ENCODE measurements at regions of chr1 and their contacts with region 1.

Region 1: DNA sequence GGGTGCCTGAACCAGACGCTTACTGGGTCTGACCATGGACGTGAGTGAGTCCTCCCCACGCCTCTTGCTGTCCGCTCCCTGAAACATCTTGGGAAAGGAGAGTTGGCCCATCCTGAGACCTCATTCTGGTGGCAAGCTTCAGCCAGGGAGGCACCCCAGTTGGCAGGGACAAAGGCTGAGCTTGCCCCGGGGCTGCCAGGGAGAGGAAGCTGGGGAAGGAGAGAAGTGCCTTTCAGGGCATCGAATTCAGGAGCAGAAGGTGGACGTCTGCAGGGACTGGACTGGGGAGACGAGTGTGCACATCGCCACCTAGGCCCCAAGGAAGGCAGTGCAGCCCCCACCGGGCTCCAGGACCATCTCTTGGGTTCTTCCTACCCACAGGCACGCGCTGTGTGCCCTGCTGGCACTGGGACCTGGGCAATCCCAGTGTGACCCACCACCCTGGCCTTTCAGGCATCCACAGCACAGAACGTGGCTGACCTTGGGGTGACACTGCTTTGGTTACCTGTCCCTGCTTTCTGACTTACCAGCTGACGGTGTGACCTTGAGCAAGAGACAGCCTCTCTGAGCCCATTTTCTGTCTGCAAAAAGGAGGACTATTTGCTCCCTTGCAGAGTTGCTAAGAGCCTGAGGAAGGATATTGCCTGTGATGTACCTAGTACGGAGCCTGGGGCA is 133.0 kb upstream of the WNT4 start:
- DNase-seq: peak; percentile 83
- H3K4me3 ChIP-seq: no peak overlapping the region; a peak in 1 of 4 replicates
- H3K27ac ChIP-seq: no peak overlapping the region
- H3K4me1 ChIP-seq: peaks cover 0 to 2% of the 10 kb centered on the region in 2 experiments; a peak in 1 of 4 replicates
- H3K27me3 ChIP-seq: peaks cover 11% of the 10 kb centered on the region; the same call in 1 of the 2 replicates
- CTCF ChIP-seq: peak; percentile 71
- EP300 ChIP-seq: no peak
- RAD21 ChIP-seq: peak; percentile 79

Region 2: GRCh38 chr1:22143065-22144036 is 132.5 kb before region 1 on chr1 and contains the start of gene WNT4:
- CTCF ChIA-PET with region 1: interaction called, 14 read pairs
- POLR2A ChIA-PET with region 1: no interaction called
- DNase-seq: peak; percentile 92
- H3K4me3 ChIP-seq: peak within 1 kb of the TSS; percentile 52 to 53
- H3K27ac ChIP-seq: no peak within 1 kb of the TSS
- H3K4me1 ChIP-seq: peaks cover 0 to 21% of the 10 kb centered on the region in 2 experiments; a peak in 1 of 4 replicates
- H3K27me3 ChIP-seq: peaks cover 5% of the 10 kb centered on the region; the same call in 1 of the 2 replicates
- CTCF ChIP-seq: no peak
- EP300 ChIP-seq: no peak
- RAD21 ChIP-seq: no peak
- polyA plus RNA-seq, gene WNT4: 0.03 and 0.08 TPM in 2 replicates

Region 3: DNA sequence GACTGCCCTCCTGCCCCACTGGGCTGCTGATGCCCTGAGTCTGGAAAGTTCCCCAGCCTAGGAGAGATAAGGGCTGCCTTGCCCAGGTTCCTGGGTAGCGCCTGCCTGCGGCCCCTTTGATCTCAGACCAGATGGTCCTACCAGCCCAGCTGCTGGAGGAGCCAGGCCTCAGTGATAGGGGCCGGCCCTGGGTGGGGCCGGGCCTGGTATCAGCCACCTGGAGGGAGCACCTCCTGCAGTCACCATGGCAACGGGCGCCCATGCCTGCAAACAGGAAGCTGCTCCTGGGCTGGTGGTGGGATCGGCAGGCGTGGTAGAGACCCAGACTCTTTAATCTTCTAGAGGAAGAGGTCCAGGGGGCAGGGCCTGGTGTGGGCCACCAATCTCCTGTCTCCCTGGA is 13.3 kb before region 1 on chr1:
- CTCF ChIA-PET with region 1: interaction called, 78 read pairs
- POLR2A ChIA-PET with region 1: no interaction called
- DNase-seq: peak; percentile 87
- H3K4me3 ChIP-seq: no peak overlapping the region
- H3K27ac ChIP-seq: peak overlapping the region in 1 of 2 experiments; percentile 70; a peak in 2 of 4 replicates
- H3K4me1 ChIP-seq: peaks cover 0 to 27% of the 10 kb centered on the region in 2 experiments; a peak in 1 of 4 replicates
- H3K27me3 ChIP-seq: peaks cover 7% of the 10 kb centered on the region; the same call in 1 of the 2 replicates
- CTCF ChIP-seq: no peak
- EP300 ChIP-seq: peak in 1 of 2 experiments; percentile 57; a peak in 1 of 4 replicates
- RAD21 ChIP-seq: no peak

Region 4: GRCh38 chr1:22289307-22289995 is 13.6 kb after region 1 on chr1:
- CTCF ChIA-PET with region 1: interaction called, 41 read pairs
- POLR2A ChIA-PET with region 1: no interaction called
- DNase-seq: peak; percentile 12
- H3K4me3 ChIP-seq: no peak overlapping the region
- H3K27ac ChIP-seq: no peak overlapping the region
- H3K4me1 ChIP-seq: peaks cover 0 to 5% of the 10 kb centered on the region in 2 experiments; a peak in 1 of 4 replicates
- H3K27me3 ChIP-seq: peaks cover 16% of the 10 kb centered on the region; the same call in 1 of the 2 replicates
- CTCF ChIP-seq: no peak
- EP300 ChIP-seq: no peak
- RAD21 ChIP-seq: no peak

Region 5: DNA sequence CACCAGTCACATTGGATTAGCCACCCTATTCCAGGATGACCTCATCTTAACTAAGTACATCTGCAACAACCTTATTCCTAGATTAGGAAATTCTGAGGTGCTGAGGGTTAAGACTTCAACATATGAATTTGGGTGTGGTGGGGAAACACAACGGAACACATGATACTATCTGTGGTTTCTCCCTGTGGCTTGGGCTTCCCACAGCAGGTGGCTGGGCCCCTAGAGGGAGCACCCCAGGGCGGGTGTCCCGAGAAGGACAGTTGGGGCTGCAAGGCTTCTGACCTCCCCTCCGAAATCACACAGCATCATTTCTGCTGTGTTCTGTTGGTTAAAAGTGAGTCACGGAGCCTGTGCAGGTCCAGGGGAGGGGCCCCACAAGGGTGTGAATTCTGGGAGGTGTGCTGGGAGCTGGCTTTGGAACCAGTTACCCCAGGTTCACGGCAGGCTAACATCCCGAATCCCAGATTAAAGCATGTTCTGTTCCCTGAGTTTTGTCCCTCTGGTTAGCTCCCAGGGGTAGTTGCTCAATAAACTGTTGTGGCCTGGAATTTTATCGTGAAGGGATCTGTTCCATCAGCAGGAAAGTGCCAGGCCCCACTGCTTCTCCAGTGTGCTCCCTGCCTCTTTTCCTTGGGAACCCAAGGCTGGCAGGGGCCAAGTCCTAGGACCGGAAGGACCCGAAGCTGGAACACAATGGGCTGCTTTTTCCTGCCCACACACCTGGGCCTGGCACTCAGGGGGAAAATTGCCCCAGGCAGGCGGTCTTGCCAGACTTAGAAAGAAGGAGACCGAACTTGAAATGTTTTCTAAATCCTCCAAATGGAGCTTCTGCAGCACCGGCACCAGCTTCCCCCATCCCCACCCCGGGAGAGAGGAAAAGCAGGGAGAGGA is 21.1 kb after region 1 on chr1:
- CTCF ChIA-PET with region 1: interaction called, 41 read pairs
- POLR2A ChIA-PET with region 1: no interaction called
- DNase-seq: no peak
- H3K4me3 ChIP-seq: no peak overlapping the region
- H3K27ac ChIP-seq: no peak overlapping the region
- H3K4me1 ChIP-seq: peaks cover 0 to 2% of the 10 kb centered on the region in 2 experiments; a peak in 1 of 4 replicates
- H3K27me3 ChIP-seq: peaks cover 9% of the 10 kb centered on the region; the same call in 1 of the 2 replicates
- CTCF ChIP-seq: no peak
- EP300 ChIP-seq: no peak
- RAD21 ChIP-seq: no peak

Region 6: GRCh38 chr1:22611530-22611947 is 335.7 kb after region 1 on chr1:
- CTCF ChIA-PET with region 1: no interaction called
- POLR2A ChIA-PET with region 1: no interaction called
- DNase-seq: no peak
- H3K4me3 ChIP-seq: no peak overlapping the region
- H3K27ac ChIP-seq: no peak overlapping the region
- H3K4me1 ChIP-seq: peaks cover 0 to 4% of the 10 kb centered on the region in 2 experiments; a peak in 1 of 4 replicates
- H3K27me3 ChIP-seq: no peaks in the 10 kb centered on the region; the same call in 1 of the 2 replicates
- CTCF ChIP-seq: no peak
- EP300 ChIP-seq: no peak
- RAD21 ChIP-seq: no peak

Measured in SK-N-SH (cell line).